Activated CD4-positive, alpha-beta T cell treated with anti-CD3 and anti-CD28 coated beads for 36 hours (primary cell): ENCODE measurements at regions of chr6 and their contacts with region 1.

Region 1: DNA sequence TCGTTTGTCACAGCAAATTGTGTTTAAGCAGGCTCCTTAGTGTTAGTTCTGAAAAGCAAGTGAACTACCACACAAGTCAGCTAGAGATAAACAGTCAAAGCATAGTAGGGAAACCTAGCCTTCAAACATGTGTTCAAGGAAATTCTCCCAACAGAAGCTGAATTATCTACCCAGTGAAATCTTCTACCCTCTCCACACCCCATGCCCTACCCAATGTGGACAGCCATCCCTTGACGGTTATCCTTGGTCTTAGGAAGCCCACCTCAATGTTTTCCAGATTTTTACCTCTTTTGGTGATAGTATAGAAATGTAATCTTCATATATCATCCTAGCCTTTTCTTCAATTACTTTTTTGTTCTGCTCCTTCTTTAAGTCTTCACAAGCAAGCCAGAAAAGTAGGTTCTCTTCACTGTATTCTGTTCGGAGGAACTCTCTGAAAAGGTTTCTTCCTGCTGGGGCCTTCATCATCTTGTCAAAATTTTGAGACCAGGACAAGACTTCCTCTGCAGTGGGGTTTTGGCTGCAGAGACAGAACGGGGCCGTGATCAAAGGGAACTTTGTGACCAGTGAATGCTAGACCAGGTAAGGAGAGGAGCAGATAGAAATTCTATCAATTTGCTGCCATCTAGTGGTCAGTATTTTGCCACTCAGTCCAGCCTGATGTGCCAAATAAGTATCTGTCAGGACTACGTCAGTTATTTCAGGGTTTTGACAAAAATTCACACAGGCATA is 21.6 kb upstream of the MTRF1L start:
- DNase-seq: peak; percentile 53
- ATAC-seq: peak; percentile 93
- H3K4me3 Mint-ChIP-seq: no peak overlapping the region
- H3K27ac Mint-ChIP-seq: no peak overlapping the region
- H3K4me1 Mint-ChIP-seq: no peaks in the 10 kb centered on the region
- H3K27me3 Mint-ChIP-seq: peaks cover 19% of the 10 kb centered on the region

Region 2: DNA sequence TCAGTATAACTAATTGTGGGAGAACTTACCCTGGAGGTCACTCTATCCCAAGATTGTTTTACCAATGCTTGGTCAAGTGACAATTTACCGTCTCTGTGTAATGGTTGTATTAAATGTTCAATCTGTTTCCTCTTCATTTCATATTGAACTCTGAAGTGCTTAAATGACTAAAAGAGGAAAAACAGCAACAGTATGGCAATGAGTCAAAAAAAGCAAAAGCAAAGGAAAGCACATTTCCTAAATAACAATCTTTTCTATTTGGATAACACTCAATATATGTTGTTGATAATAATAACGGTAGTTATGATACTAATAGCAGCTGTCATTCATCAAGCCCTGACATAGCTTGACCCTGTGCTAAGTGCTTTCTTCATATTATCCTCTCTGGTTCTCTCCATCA is 539.3 kb before region 1 on chr6:
- CTCF ChIA-PET with region 1: no interaction called
- POLR2A ChIA-PET with region 1: no interaction called
- intact Hi-C with region 1: loop called in 1 of 2 experiments (anchors 10 kb)
- DNase-seq: no peak
- ATAC-seq: no peak
- H3K4me3 Mint-ChIP-seq: no peak overlapping the region
- H3K27ac Mint-ChIP-seq: no peak overlapping the region
- H3K4me1 Mint-ChIP-seq: no peaks in the 10 kb centered on the region
- H3K27me3 Mint-ChIP-seq: no peaks in the 10 kb centered on the region

Region 3: DNA sequence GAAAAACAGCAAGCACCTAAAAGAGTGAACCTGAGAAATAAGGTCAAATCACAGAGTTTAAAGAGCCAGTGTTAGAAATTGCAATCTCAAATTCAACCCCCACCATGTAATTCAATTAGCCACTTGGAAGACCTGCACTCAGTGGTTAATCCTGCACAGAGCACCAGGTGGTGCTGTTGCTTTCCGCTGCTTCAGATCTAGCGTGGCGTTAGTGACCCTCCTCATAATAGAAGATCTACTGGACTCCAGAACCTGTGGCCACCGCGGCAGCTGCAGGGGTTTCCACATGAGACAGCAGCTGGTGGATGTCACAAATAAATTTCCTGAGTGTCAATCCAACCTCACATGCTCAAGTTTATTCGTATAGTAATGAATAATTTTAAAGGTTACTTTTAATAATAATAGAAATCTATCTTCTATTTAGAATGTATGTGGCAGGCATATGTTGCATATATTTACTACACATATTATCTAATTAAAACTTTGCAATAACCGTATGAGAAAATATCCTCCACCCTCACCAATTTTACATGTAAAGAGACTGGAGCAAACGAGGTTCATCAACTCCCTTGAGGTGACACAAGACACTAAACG is 471.4 kb before region 1 on chr6:
- CTCF ChIA-PET with region 1: no interaction called
- POLR2A ChIA-PET with region 1: no interaction called
- intact Hi-C with region 1: loop called in 1 of 2 experiments (anchors 5 kb)
- DNase-seq: peak; percentile 55
- ATAC-seq: peak; percentile 57
- H3K4me3 Mint-ChIP-seq: no peak overlapping the region
- H3K27ac Mint-ChIP-seq: no peak overlapping the region
- H3K4me1 Mint-ChIP-seq: no peaks in the 10 kb centered on the region
- H3K27me3 Mint-ChIP-seq: peaks cover 9% of the 10 kb centered on the region

Region 4: DNA sequence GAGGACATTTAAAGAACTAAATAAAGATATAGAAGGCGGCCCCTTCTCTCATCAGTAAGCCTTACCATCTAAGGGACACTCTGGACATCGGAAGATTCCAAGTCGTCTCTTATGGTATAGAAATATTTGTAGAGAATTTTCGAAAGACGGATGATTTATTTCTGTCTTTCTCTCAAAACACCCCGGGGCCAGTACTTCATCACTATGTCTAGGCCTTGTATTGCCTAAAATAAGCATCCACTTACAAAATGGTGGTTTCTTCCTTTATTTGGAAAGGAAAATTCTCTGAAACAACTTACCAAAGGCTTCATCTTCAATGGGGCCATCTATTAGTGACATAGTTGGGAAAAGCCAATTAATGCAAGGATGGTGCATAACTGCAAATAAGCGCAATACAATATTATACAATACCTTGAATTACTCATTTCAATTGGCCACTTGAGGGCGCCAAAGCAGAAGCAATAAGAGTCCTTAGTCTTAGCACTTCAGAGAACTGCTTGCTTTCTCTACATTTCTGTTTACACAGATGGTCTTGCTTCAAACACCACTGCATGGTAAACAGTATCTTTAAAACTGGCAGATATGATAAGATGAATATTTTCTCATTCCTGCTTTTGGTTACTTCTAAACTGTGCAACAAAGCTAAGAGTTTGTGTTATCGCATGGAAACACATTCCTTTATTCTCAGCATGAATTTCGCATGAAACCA is 160.4 kb before region 1 on chr6:
- CTCF ChIA-PET with region 1: interaction called, 5 read pairs
- POLR2A ChIA-PET with region 1: no interaction called
- intact Hi-C with region 1: loop called (anchors 1 kb)
- DNase-seq: peak; percentile 80
- ATAC-seq: peak; percentile 72
- H3K4me3 Mint-ChIP-seq: no peak overlapping the region
- H3K27ac Mint-ChIP-seq: no peak overlapping the region
- H3K4me1 Mint-ChIP-seq: no peaks in the 10 kb centered on the region
- H3K27me3 Mint-ChIP-seq: peaks cover 7% of the 10 kb centered on the region

Region 5: GRCh38 chr6:152954443-152954842 is 69.7 kb before region 1 on chr6:
- CTCF ChIA-PET with region 1: interaction called, 13 read pairs
- POLR2A ChIA-PET with region 1: no interaction called
- intact Hi-C with region 1: loop called (anchors 1 to 2 kb)
- DNase-seq: no peak
- ATAC-seq: no peak
- H3K4me3 Mint-ChIP-seq: no peak overlapping the region
- H3K27ac Mint-ChIP-seq: no peak overlapping the region
- H3K4me1 Mint-ChIP-seq: peaks cover 4% of the 10 kb centered on the region
- H3K27me3 Mint-ChIP-seq: peaks cover 15% of the 10 kb centered on the region

Region 6: DNA sequence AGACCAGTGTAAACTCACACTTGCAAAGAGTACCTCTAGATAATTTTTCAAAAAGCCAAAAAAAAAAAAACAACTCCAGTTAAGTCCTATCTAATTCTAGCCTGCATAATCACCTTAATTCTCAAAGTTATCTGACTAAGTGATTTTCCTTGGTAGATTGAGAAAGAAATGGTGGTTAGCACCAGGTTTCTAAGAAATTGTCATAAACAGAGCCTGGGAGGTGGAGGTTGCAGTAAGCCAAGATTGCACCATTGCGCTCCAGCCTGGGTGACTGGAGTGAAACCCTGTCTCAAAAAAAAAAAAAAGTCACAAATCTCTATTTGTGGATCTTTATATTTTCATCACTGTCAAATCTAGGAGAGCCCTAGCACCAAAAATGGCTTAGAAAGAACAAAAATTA is 50.2 kb before region 1 on chr6:
- CTCF ChIA-PET with region 1: no interaction called
- POLR2A ChIA-PET with region 1: no interaction called
- intact Hi-C with region 1: no loop called
- DNase-seq: no peak
- ATAC-seq: peak; percentile 42
- H3K4me3 Mint-ChIP-seq: no peak overlapping the region
- H3K27ac Mint-ChIP-seq: no peak overlapping the region
- H3K4me1 Mint-ChIP-seq: peaks cover 34% of the 10 kb centered on the region
- H3K27me3 Mint-ChIP-seq: no peaks in the 10 kb centered on the region

Region 7: DNA sequence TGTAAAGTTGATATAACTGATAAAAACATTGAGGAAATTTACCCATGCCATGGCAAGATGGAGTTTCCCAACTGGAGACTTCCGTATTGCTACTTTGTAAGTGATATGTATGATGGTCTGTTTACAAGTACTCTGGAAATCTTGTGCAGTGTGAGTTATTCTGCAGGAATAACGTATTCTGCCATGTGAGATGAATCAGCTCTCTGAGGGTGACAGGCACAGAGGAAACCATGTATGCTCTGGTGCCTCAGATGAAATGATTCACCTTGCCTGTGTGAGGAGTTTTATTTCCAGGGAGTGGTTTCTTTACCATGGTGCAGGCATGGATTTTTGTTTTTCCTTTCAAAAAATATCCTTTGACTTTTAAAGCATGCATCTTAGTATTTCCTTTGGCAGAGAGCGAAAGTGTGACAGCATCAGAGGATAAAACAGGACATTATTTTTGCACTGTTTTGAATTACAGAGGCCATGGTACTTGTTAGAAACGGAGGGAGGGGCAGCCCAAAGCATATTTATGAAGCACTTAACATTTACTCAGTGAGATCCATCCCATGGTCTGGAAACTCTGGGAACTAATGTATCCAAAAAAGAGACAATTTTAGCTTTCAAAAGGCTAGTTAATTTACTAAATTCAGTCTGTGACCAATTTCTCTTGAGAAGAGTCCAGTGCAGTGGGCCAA is 14.4 kb after region 1 on chr6:
- CTCF ChIA-PET with region 1: no interaction called
- POLR2A ChIA-PET with region 1: no interaction called
- intact Hi-C with region 1: no loop called
- DNase-seq: no peak
- ATAC-seq: no peak
- H3K4me3 Mint-ChIP-seq: no peak overlapping the region
- H3K27ac Mint-ChIP-seq: no peak overlapping the region
- H3K4me1 Mint-ChIP-seq: no peaks in the 10 kb centered on the region
- H3K27me3 Mint-ChIP-seq: peaks cover 2% of the 10 kb centered on the region